ENCODE measurements at regions of chr2 and their contacts with region 1.

Region 1: GRCh38 chr2:241149925-241150659 is at the start of gene PPP1R7:
- DNase-seq: peak; percentile 94 to 97 (median 95)
- H3K4me3 ChIP-seq: peak within 1 kb of the TSS; percentile 70 to 93
- H3K4me3 Mint-ChIP-seq: peak within 1 kb of the TSS; percentile 93 to 100 (median 100)
- H3K27ac ChIP-seq: peak within 1 kb of the TSS; percentile 75
- H3K27ac Mint-ChIP-seq: peak within 1 kb of the TSS; percentile 94 to 99 (median 97)
- H3K4me1 ChIP-seq: peaks cover 26% of the 10 kb centered on the region
- H3K4me1 Mint-ChIP-seq: peaks cover 29 to 51% (median 44%) of the 10 kb centered on the region in 4 donors
- H3K27me3 ChIP-seq: no peaks in the 10 kb centered on the region
- H3K27me3 Mint-ChIP-seq: no peaks in the 10 kb centered on the region
- total RNA-seq, gene PPP1R7: 61.3 to 68.9 TPM

Region 2: DNA sequence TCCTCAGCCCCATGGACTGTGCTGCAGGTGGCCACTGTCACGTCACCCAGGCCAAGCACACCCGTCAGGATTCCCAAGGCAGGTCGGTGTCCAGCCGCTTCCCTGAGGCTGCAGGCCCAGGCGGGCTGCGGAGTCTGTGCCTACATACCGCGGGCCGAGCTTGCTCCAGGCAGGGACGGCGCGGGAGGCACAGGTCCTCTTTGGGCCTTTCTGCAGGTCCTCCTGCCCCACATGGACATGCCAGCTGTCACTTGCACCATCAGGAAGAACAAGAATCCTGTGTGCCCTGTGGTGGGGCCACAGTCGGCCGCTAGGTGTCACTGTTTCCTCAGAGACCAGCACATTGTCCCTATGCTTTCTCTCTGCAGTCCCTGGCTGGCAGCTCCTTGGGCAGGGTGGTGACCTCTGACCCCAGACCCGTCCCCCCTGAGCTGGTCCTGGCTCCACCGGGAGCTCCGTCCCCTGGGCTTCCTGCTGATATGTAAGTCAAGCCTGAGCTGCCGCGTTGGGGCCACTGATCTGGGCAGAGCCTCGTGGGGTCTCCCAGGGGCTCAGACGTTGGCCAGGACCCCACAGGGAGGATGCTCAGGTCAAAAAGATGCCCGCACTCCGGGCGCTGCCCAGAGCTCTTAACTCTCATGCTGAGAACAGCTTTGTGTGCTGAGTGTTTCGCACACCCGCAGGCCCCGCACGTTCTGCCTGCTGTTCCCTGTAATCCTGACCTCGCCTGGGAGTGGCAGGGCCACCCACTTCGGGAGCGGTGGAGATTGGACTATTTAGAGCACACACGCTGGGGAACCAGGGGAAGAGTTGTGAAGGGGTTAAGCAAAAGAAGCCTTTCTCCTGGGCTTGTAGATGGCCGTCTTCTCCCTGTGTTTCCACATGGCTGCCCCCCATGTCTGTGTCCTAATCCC is 298.8 kb before region 1 on chr2:
- CTCF ChIA-PET with region 1: no interaction called
- POLR2A ChIA-PET with region 1: interaction called, 3 read pairs
- intact Hi-C with region 1: loop called (anchors 5 kb)
- DNase-seq: peak; percentile 70 to 80 (median 76)
- H3K4me3 ChIP-seq: no peak overlapping the region
- H3K4me3 Mint-ChIP-seq: no peak overlapping the region
- H3K27ac ChIP-seq: no peak overlapping the region
- H3K27ac Mint-ChIP-seq: no peak overlapping the region
- H3K4me1 ChIP-seq: no peaks in the 10 kb centered on the region
- H3K4me1 Mint-ChIP-seq: no peaks in the 10 kb centered on the region
- H3K27me3 ChIP-seq: no peaks in the 10 kb centered on the region
- H3K27me3 Mint-ChIP-seq: peaks cover 0 to 1% of the 10 kb centered on the region in 2 donors

Region 3: DNA sequence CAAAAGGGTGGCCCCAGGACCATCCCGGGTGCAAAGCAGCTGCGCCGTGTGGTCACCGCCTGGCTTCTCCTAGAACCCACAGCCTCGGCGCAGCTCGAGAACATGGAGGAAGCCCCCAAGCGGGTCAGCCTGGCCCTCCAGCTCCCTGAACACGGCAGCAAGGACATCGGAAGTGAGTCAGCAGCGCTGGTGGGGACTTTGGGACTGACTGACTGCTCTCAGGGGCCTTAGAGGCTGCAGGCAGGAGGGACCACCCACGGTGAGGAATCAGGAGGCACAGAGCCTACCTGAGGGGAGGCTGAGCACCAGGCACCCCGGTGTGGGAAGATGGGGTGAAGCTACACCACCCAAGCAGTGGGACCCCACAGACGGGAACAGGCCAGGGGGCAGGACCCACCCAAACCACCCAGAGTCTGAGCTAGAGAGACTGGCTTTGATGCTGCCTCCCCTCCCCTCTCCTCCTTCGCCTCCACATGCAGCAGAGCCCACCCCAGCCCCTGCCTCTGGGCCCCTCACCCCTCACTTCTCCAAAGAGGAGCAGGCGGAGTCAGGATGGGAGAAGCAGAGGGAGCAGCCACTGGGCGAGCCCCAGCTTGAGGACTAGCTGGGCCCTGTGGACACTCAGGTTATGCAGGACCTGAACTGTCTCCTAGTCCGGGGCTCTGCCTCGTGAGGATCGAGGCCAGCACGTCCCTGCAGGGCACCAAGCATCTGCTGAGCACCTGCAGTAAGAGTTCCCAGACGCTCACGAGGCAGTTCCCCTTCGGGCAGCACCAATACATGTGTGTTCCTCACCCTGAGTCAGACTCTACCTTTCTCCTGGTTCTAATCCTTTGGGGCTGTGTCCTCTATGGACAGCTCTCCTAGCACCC is 76.7 kb before region 1 on chr2:
- CTCF ChIA-PET with region 1: interaction called, 76 read pairs
- POLR2A ChIA-PET with region 1: interaction called, 37 read pairs
- intact Hi-C with region 1: loop called (anchors 1 kb)
- DNase-seq: no peak
- H3K4me3 ChIP-seq: no peak overlapping the region
- H3K4me3 Mint-ChIP-seq: no peak overlapping the region
- H3K27ac ChIP-seq: no peak overlapping the region
- H3K27ac Mint-ChIP-seq: peak overlapping the region in 1 of 7 donors; percentile 80
- H3K4me1 ChIP-seq: no peaks in the 10 kb centered on the region
- H3K4me1 Mint-ChIP-seq: peaks cover 7 to 11% (median 10%) of the 10 kb centered on the region in 4 donors
- H3K27me3 ChIP-seq: no peaks in the 10 kb centered on the region
- H3K27me3 Mint-ChIP-seq: no peaks in the 10 kb centered on the region

Region 4: DNA sequence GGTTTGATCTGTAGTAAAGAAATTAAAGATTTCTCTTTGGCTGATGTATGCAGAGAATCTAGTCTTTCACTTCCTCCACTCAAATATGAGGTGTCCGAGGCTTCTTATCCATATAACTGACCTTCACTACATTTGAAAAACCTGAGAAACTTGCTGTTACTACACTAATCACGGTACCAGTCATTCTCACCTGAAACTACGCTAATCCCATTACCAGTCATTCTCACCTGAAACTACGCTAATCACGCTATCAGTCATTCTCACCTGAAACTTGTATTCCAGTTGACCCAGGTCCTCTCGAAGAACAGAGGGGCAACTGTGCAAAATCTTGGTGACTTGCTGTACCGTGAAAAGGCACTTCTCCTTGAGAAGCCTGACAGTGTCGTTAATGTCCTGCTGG is 53.1 kb before region 1 on chr2:
- CTCF ChIA-PET with region 1: interaction called, 44 read pairs
- POLR2A ChIA-PET with region 1: interaction called, 299 read pairs
- intact Hi-C with region 1: loop called (anchors 1 kb)
- DNase-seq: no peak
- H3K4me3 ChIP-seq: no peak overlapping the region
- H3K4me3 Mint-ChIP-seq: peak overlapping the region in 4 of 8 donors; percentile 10 to 73 (median 44)
- H3K27ac ChIP-seq: peak overlapping the region; percentile 55
- H3K27ac Mint-ChIP-seq: peak overlapping the region; percentile 74 to 99 (median 97)
- H3K4me1 ChIP-seq: peaks cover 78% of the 10 kb centered on the region
- H3K4me1 Mint-ChIP-seq: peaks cover 40 to 81% (median 59%) of the 10 kb centered on the region in 4 donors
- H3K27me3 ChIP-seq: no peaks in the 10 kb centered on the region
- H3K27me3 Mint-ChIP-seq: no peaks in the 10 kb centered on the region

Region 5: GRCh38 chr2:241123816-241124536 is 26.1 kb before region 1 on chr2:
- CTCF ChIA-PET with region 1: interaction called, 10 read pairs
- POLR2A ChIA-PET with region 1: interaction called, 18 read pairs
- intact Hi-C with region 1: no loop called
- DNase-seq: peak; percentile 52 to 74 (median 61)
- H3K4me3 ChIP-seq: no peak overlapping the region
- H3K4me3 Mint-ChIP-seq: peak overlapping the region; percentile 43 to 81 (median 70)
- H3K27ac ChIP-seq: peak overlapping the region; percentile 29
- H3K27ac Mint-ChIP-seq: peak overlapping the region; percentile 80 to 95 (median 89)
- H3K4me1 ChIP-seq: peaks cover 47% of the 10 kb centered on the region
- H3K4me1 Mint-ChIP-seq: peaks cover 21 to 42% (median 33%) of the 10 kb centered on the region in 4 donors
- H3K27me3 ChIP-seq: no peaks in the 10 kb centered on the region
- H3K27me3 Mint-ChIP-seq: no peaks in the 10 kb centered on the region

Region 6: GRCh38 chr2:241558532-241559322 is 408.6 kb after region 1 on chr2 and contains the start of gene BOK:
- CTCF ChIA-PET with region 1: no interaction called
- POLR2A ChIA-PET with region 1: no interaction called
- intact Hi-C with region 1: no loop called
- DNase-seq: no peak
- H3K4me3 ChIP-seq: peak within 1 kb of the TSS in 1 of 2 donors; percentile 9
- H3K4me3 Mint-ChIP-seq: peak within 1 kb of the TSS; percentile 62 to 80 (median 74)
- H3K27ac ChIP-seq: no peak within 1 kb of the TSS
- H3K27ac Mint-ChIP-seq: no peak within 1 kb of the TSS
- H3K4me1 ChIP-seq: no peaks in the 10 kb centered on the region
- H3K4me1 Mint-ChIP-seq: peaks cover 4 to 19% (median 5%) of the 10 kb centered on the region in 4 donors
- H3K27me3 ChIP-seq: peaks cover 8% of the 10 kb centered on the region
- H3K27me3 Mint-ChIP-seq: peaks cover 22 to 23% of the 10 kb centered on the region in 2 donors
- total RNA-seq, gene BOK: not detected

Measured in CD4-positive, alpha-beta memory T cell (primary cell).